Activated naive CD4-positive, alpha-beta T cell treated with anti-CD3 and anti-CD28 coated beads for 36 hours (primary cell): ENCODE measurements at regions of chr17 and their contacts with region 1.

Region 1: DNA sequence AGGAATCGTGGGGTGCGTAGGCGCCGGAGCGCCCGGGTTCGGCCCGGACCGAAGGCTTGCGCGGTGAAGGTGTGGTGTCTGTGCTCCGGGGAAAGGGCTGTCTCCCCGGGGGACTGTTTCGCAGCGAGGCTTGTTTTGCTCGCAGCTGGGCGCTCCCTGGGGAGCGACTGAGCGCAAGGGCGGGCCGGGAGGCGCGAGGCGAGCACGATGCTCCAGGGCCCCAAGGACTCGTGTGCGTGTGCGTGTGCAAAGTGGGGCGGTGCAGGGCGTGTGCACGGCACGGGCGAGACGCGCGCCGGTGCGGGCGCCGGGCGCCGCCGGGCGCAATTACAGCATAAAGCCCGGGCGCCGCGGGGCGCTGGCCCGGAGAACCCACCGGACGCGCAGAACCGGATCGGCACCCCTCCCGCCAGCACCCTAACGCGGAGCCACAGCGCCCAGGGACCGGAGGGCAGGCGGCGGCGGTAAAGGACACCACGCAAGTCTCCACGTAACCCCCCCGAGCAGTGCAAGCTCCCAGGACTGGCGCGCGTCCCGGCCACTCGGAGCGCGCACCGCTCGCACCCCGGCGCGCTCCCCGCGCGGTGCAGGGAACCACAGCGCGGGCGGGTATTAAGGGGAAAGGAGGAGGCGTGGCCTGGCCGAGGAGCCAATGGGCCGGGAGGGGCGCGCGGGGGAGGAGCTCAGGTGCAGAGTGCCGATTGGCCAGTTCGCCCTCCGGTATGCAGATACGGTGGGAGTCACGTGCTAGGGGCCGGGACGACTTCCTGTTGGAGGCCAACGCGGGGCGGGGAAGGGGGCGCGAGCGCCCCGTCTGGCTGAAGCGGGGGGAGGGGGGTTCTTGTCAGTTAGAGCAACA is at the start of gene TNRC6C:
- DNase-seq: peak; percentile 100
- H3K4me3 Mint-ChIP-seq: peak within 1 kb of the TSS; percentile 89
- H3K27ac Mint-ChIP-seq: peak within 1 kb of the TSS; percentile 84
- H3K4me1 Mint-ChIP-seq: peaks cover 32% of the 10 kb centered on the region
- H3K27me3 Mint-ChIP-seq: peaks cover 4% of the 10 kb centered on the region
- total RNA-seq, gene TNRC6C: 11.4 to 12.8 TPM

Region 2: GRCh38 chr17:77666881-77667395 is 291.1 kb before region 1 on chr17:
- CTCF ChIA-PET with region 1: no interaction called
- intact Hi-C with region 1: loop called (anchors 2 kb)
- DNase-seq: peak; percentile 86
- H3K4me3 Mint-ChIP-seq: peak overlapping the region; percentile 94
- H3K27ac Mint-ChIP-seq: peak overlapping the region; percentile 98
- H3K4me1 Mint-ChIP-seq: peaks cover 49% of the 10 kb centered on the region
- H3K27me3 Mint-ChIP-seq: no peaks in the 10 kb centered on the region

Region 3: DNA sequence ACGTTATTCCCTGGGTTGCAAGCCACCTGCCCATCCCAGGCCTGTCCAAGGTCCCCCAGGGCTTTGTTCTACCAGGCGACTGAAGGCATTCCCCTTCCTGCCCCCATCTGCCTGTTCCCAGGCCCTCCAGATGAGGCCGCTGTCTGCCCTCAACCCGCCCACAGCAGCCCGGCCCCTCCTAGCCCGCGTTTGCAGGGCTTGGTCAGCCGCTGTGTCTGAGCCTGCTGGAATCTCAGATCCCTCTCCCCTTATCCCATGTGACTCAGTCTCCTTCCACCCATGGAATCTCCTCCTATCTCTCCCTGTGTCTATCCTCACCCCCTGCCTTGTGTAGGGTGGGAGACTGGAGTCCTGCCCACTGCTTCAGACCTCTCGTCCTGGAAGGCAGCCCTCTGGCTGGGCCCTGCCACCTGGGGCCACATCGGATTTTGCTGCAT is 185.6 kb before region 1 on chr17:
- CTCF ChIA-PET with region 1: no interaction called
- intact Hi-C with region 1: loop called (anchors 2 kb)
- DNase-seq: peak; percentile 81
- H3K4me3 Mint-ChIP-seq: no peak overlapping the region
- H3K27ac Mint-ChIP-seq: no peak overlapping the region
- H3K4me1 Mint-ChIP-seq: peaks cover 10% of the 10 kb centered on the region
- H3K27me3 Mint-ChIP-seq: no peaks in the 10 kb centered on the region

Region 4: GRCh38 chr17:77783991-77784820 is 173.9 kb before region 1 on chr17:
- CTCF ChIA-PET with region 1: no interaction called
- intact Hi-C with region 1: loop called (anchors 1 kb)
- DNase-seq: peak; percentile 88
- H3K4me3 Mint-ChIP-seq: no peak overlapping the region
- H3K27ac Mint-ChIP-seq: peak overlapping the region; percentile 75
- H3K4me1 Mint-ChIP-seq: peaks cover 17% of the 10 kb centered on the region
- H3K27me3 Mint-ChIP-seq: no peaks in the 10 kb centered on the region

Region 5: GRCh38 chr17:77882481-77883212 is 75.4 kb before region 1 on chr17:
- CTCF ChIA-PET with region 1: no interaction called
- intact Hi-C with region 1: loop called (anchors 2 kb)
- DNase-seq: peak; percentile 94
- H3K4me3 Mint-ChIP-seq: peak overlapping the region; percentile 54
- H3K27ac Mint-ChIP-seq: peak overlapping the region; percentile 88
- H3K4me1 Mint-ChIP-seq: peaks cover 87% of the 10 kb centered on the region
- H3K27me3 Mint-ChIP-seq: no peaks in the 10 kb centered on the region

Region 6: DNA sequence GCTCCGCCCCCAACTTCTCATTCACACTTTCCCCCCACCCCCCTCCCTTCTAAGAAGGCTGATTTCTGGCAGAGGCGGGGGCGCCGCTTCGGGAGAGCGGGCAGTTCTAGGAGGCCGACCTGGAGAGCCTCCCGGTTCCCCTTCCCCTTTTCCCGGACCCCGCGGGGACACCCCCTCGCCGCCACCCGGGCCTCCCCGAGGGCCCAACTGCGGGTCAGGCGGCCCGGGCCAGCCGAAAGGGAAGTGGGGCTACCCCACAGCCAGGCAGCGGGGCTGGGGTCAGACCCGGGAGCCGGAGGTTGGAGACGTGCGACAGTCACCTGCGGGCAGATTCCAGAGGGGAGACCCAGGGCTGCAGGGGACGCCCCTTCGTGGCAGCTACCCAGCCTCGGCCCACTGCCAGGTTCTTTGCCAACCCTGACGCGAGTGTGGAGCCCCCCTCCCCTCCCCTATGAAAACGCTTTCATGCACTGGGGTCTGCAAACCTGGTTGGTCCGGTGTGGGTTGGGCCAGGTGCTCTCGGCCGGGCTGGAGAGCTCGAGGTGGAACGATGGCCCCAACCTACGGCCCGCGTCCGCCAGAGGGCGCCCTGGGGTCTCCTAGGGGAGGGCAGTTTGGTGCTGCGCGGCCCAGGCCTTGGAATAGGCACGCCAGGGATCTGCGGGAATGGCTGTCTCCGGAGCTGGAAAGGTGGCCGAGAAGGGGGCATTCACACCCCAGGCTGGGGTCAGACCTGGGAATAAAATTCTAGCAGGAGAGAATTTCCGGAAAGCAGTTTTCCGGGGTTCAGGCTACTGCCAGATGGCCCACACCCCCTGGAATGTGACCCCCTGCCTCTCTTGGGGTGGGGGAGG is 402.5 kb after region 1 on chr17:
- CTCF ChIA-PET with region 1: no interaction called
- intact Hi-C with region 1: no loop called
- DNase-seq: peak; percentile 97
- H3K4me3 Mint-ChIP-seq: peak overlapping the region; percentile 73
- H3K27ac Mint-ChIP-seq: peak overlapping the region; percentile 89
- H3K4me1 Mint-ChIP-seq: peaks cover 37% of the 10 kb centered on the region
- H3K27me3 Mint-ChIP-seq: peaks cover 5% of the 10 kb centered on the region